CD4-positive, alpha-beta T cell (primary cell): ENCODE measurements at regions of chr1 and their contacts with region 1.

Region 1: GRCh38 chr1:180415985-180416633 is 86.3 kb downstream of the ACBD6 start:
- DNase-seq: peak in 3 of 14 experiments; percentile 25 to 30 (median 27)
- ATAC-seq: no peak
- H3K4me3 ChIP-seq: no peak overlapping the region
- H3K4me3 Mint-ChIP-seq: no peak overlapping the region
- H3K27ac ChIP-seq: no peak overlapping the region
- H3K27ac Mint-ChIP-seq: no peak overlapping the region
- H3K4me1 ChIP-seq: no peaks in the 10 kb centered on the region
- H3K4me1 Mint-ChIP-seq: no peaks in the 10 kb centered on the region
- H3K27me3 ChIP-seq: no peaks in the 10 kb centered on the region
- H3K27me3 Mint-ChIP-seq: no peaks in the 10 kb centered on the region
- CTCF ChIP-seq: peak; percentile 62

Region 2: GRCh38 chr1:180188091-180188506 is 228.0 kb before region 1 on chr1:
- CTCF ChIA-PET with region 1: no interaction called
- POLR2A ChIA-PET with region 1: no interaction called
- intact Hi-C with region 1: loop called in 1 of 2 experiments (anchors 10 kb)
- DNase-seq: peak in 2 of 14 experiments; percentile 8 to 9
- ATAC-seq: no peak
- H3K4me3 ChIP-seq: no peak overlapping the region
- H3K4me3 Mint-ChIP-seq: no peak overlapping the region
- H3K27ac ChIP-seq: no peak overlapping the region
- H3K27ac Mint-ChIP-seq: no peak overlapping the region
- H3K4me1 ChIP-seq: peaks cover 4% of the 10 kb centered on the region
- H3K4me1 Mint-ChIP-seq: no peaks in the 10 kb centered on the region
- H3K27me3 ChIP-seq: no peaks in the 10 kb centered on the region
- H3K27me3 Mint-ChIP-seq: no peaks in the 10 kb centered on the region
- CTCF ChIP-seq: no peak

Region 3: DNA sequence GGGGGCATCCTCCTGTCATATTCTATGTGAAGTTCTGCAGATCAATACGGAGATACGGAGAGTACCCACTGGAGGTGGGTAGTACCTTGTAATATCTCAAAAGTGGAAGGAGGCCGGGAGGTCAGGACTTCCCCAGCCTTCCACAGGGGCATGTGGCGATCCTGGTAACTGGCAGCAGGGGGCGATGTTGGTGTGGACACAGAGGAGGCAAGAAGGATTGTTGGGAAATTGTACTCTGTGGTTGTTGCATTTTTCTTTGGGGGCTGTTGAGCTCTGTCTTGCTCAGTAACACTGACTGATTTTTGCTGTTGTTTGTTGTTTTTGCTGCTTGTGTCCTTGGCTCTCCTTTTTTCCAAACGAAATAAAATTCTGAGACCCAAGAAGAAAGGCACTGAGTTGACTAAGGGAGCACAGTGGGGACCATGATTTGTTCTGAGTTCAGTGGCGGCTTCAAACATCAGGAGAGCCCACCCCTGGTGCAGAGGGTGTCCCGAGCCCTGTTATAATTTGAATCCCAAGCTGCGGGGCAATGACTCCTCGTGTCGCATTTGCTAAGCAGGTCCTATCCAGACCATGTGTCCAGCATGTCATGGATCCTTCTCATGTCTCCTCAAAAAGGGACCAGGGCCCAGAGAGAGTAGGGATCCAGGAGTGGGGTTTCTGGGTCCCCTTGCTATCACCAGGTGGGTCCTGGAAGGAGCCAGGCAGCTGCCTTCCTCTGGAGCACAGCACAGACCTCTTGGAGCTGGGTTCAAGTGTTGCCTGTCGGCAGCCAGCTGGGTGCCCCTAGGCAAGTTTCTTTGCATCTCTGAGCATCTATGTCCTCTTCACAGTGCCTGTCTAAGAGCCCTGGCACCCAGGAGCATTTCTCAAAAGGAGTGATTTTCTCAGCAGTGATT is 163.2 kb before region 1 on chr1:
- CTCF ChIA-PET with region 1: no interaction called
- POLR2A ChIA-PET with region 1: no interaction called
- intact Hi-C with region 1: loop called (anchors 2 kb)
- DNase-seq: peak; percentile 40 to 78 (median 54)
- ATAC-seq: peak; percentile 66
- H3K4me3 ChIP-seq: no peak overlapping the region
- H3K4me3 Mint-ChIP-seq: no peak overlapping the region
- H3K27ac ChIP-seq: no peak overlapping the region
- H3K27ac Mint-ChIP-seq: no peak overlapping the region
- H3K4me1 ChIP-seq: no peaks in the 10 kb centered on the region
- H3K4me1 Mint-ChIP-seq: no peaks in the 10 kb centered on the region
- H3K27me3 ChIP-seq: peaks cover 27 to 43% of the 10 kb centered on the region in 2 experiments
- H3K27me3 Mint-ChIP-seq: peaks cover 78% of the 10 kb centered on the region
- CTCF ChIP-seq: peak; percentile 76

Region 4: GRCh38 chr1:180365039-180365438 is 51.1 kb before region 1 on chr1:
- CTCF ChIA-PET with region 1: no interaction called
- POLR2A ChIA-PET with region 1: no interaction called
- intact Hi-C with region 1: no loop called
- DNase-seq: no peak
- ATAC-seq: no peak
- H3K4me3 ChIP-seq: no peak overlapping the region
- H3K4me3 Mint-ChIP-seq: no peak overlapping the region
- H3K27ac ChIP-seq: no peak overlapping the region
- H3K27ac Mint-ChIP-seq: no peak overlapping the region
- H3K4me1 ChIP-seq: no peaks in the 10 kb centered on the region
- H3K4me1 Mint-ChIP-seq: peaks cover 5% of the 10 kb centered on the region
- H3K27me3 ChIP-seq: no peaks in the 10 kb centered on the region
- H3K27me3 Mint-ChIP-seq: no peaks in the 10 kb centered on the region
- CTCF ChIP-seq: no peak

Region 5: GRCh38 chr1:180720753-180721152 is 304.6 kb after region 1 on chr1:
- CTCF ChIA-PET with region 1: no interaction called
- POLR2A ChIA-PET with region 1: no interaction called
- intact Hi-C with region 1: no loop called
- DNase-seq: no peak
- ATAC-seq: no peak
- H3K4me3 ChIP-seq: no peak overlapping the region
- H3K4me3 Mint-ChIP-seq: no peak overlapping the region
- H3K27ac ChIP-seq: no peak overlapping the region
- H3K27ac Mint-ChIP-seq: no peak overlapping the region
- H3K4me1 ChIP-seq: no peaks in the 10 kb centered on the region
- H3K4me1 Mint-ChIP-seq: peaks cover 9% of the 10 kb centered on the region
- H3K27me3 ChIP-seq: no peaks in the 10 kb centered on the region
- H3K27me3 Mint-ChIP-seq: no peaks in the 10 kb centered on the region
- CTCF ChIP-seq: no peak